ENCODE measurements at regions of chr7 and their contacts with region 1.

Region 1: GRCh38 chr7:66740302-66740979 is at the start of gene RABGEF1:
- DNase-seq: peak; percentile 94 to 96
- ATAC-seq: peak; percentile 94 to 95
- H3K4me3 ChIP-seq: peak within 1 kb of the TSS; percentile 76
- H3K27ac ChIP-seq: peak within 1 kb of the TSS; percentile 82 to 92
- H3K4me1 ChIP-seq: peaks cover 9% of the 10 kb centered on the region; the same call in 2 of the 3 replicates
- CTCF ChIP-seq: no peak
- EP300 ChIP-seq: no peak
- POLR2A ChIP-seq: peak; percentile 73
- RAD21 ChIP-seq: no peak
- polyA plus RNA-seq, gene RABGEF1: 22.4 and 22.6 TPM in 2 replicates

Region 2: GRCh38 chr7:66844552-66845378 is 104.3 kb after region 1 on chr7:
- CTCF ChIA-PET with region 1: no interaction called
- POLR2A ChIA-PET with region 1: interaction called, 11 read pairs
- DNase-seq: peak; percentile 91 to 99
- ATAC-seq: peak; percentile 95 to 96
- H3K4me3 ChIP-seq: peak overlapping the region; percentile 96
- H3K27ac ChIP-seq: peak overlapping the region; percentile 90 to 91
- H3K4me1 ChIP-seq: peaks cover 20% of the 10 kb centered on the region; the same call in 2 of the 3 replicates
- CTCF ChIP-seq: no peak
- EP300 ChIP-seq: no peak
- POLR2A ChIP-seq: peak; percentile 91
- RAD21 ChIP-seq: no peak